HepG2 (cell line): ENCODE measurements at regions of chr22 and their contacts with region 1.

Region 1: GRCh38 chr22:17077255-17077654 is 7.5 kb upstream of the IL17RA start:
- DNase-seq: no peak
- ATAC-seq: no peak
- H3K4me3 ChIP-seq: no peak overlapping the region
- H3K27ac ChIP-seq: no peak overlapping the region
- H3K4me1 ChIP-seq: no peaks in the 10 kb centered on the region
- H3K27me3 ChIP-seq: no peaks in the 10 kb centered on the region
- CTCF ChIP-seq: no peak
- EP300 ChIP-seq: no peak
- POLR2A ChIP-seq: no peak
- RAD21 ChIP-seq: no peak

Region 2: DNA sequence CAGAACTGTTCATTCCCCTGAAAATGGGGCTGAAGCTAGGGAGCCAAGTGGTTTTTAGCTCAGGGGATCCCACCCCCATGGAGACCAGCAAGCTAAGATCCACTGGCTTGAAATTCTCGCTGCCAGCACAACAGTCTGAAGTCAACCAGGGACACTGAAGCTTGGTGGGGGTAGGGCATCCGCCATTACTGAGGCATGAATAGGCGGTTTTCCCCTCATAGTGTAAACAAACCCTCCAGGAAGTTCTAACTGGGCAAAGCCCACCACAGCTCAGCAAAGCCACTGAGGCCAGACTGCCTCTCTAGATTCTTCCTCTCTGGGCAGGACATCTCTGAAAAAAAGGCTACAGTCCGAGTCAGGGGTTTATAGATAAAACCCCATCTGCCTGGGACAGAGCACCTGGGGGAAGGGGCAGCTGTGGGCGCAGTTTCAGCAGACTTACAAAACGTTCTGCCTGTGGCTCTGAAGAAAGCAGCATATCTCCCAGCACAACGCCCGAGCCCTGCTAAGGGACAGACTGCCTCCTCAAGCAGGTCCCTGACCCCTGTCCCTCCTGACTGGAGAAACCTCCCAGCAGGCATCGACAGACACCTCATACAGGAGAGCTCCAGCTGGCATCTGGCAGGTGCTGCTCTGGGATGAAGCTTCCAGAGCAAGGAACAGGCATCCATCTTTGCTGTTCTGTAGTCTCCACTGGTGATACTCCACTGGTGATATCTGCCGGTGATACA is 101.9 kb before region 1 on chr22:
- CTCF ChIA-PET with region 1: no interaction called
- POLR2A ChIA-PET with region 1: no interaction called
- in situ Hi-C with region 1: no loop called
- intact Hi-C with region 1: no loop called
- DNase-seq: no peak
- ATAC-seq: no peak
- H3K4me3 ChIP-seq: no peak overlapping the region
- H3K27ac ChIP-seq: no peak overlapping the region
- H3K4me1 ChIP-seq: no peaks in the 10 kb centered on the region
- H3K27me3 ChIP-seq: no peaks in the 10 kb centered on the region
- CTCF ChIP-seq: no peak
- EP300 ChIP-seq: no peak
- POLR2A ChIP-seq: no peak
- RAD21 ChIP-seq: no peak

Region 3: GRCh38 chr22:17047656-17048055 is 29.6 kb before region 1 on chr22:
- CTCF ChIA-PET with region 1: no interaction called
- POLR2A ChIA-PET with region 1: no interaction called
- in situ Hi-C with region 1: no loop called
- intact Hi-C with region 1: no loop called
- DNase-seq: no peak
- ATAC-seq: no peak
- H3K4me3 ChIP-seq: no peak overlapping the region
- H3K27ac ChIP-seq: no peak overlapping the region
- H3K4me1 ChIP-seq: no peaks in the 10 kb centered on the region
- H3K27me3 ChIP-seq: no peaks in the 10 kb centered on the region; a peak in 1 of 5 replicates
- CTCF ChIP-seq: no peak
- EP300 ChIP-seq: no peak
- POLR2A ChIP-seq: no peak
- RAD21 ChIP-seq: no peak

Region 4: DNA sequence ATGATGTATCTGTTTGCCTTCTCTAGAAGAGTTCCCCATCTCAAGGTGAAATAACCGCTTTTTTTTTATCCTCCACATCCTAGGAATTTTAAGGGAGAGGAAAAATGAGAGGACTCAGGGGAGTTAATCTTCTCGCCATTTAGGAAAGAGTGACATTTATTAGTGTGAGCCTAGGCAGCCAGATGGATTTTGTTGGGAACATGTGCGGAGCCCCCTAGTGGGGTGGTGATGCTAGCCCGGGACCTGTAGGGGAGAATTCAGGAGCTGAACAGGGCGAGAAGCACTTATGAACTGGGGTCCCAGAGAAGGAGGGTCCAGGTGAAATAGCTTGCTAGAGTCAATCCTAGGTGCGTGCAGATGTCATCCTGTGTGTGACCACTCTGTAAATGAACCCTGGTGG is 18.3 kb after region 1 on chr22:
- CTCF ChIA-PET with region 1: interaction called, 10 read pairs
- POLR2A ChIA-PET with region 1: no interaction called
- in situ Hi-C with region 1: no loop called
- intact Hi-C with region 1: loop called (anchors 1 kb)
- DNase-seq: no peak
- ATAC-seq: peak; percentile 84
- H3K4me3 ChIP-seq: no peak overlapping the region
- H3K27ac ChIP-seq: no peak overlapping the region
- H3K4me1 ChIP-seq: no peaks in the 10 kb centered on the region
- H3K27me3 ChIP-seq: no peaks in the 10 kb centered on the region
- CTCF ChIP-seq: 0 out of 2 replicates have a peak, but pooled peaks have one; percentile 20
- EP300 ChIP-seq: no peak
- POLR2A ChIP-seq: no peak
- RAD21 ChIP-seq: no peak

Region 5: DNA sequence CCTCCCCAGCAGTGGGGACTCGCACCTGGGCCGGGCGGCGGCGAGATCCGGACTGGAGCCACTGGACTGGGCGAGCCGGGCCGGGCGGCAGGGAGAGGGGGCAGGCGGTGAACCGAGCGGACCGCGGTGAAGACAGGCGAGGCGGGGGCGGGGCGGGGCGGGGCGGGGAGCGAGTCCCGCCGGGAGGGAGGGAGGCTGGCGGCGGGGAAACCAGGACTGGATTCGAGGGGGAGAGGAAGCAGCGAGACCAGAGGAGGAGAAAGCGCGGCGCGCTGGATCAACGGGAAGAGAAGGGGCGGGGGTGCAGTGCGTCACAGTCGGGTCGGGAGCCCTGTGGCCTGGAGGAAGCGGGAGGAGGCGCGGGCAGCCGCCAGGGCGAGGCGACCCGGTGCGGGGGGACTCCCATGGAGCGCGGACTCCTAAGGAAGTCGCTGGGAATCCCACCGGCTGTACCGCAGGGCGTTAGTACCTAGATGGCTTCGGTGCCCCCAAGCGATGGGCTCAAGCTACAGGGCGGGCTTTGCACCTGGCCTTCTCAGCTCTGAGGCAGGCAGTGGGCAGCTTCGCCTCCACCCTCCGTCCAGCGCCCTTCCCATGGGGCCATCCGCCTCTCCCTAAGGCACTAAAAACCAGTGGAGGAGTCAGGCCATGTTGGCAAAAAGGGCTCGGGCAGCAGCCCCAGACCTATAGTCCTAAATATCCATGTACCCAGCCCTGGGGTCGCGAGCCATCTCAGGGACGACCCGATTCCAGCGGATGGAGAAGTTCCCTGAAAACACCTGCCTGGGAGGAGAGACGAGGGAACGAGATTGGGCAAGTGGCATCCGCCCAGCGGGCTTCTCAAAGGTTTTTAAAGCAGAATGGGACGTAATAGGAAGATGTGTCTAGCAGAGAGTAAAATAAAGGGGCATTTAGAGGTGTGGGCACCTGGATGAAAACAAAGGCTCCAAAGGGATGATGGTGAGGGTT is 44.3 kb after region 1 on chr22 and contains the start of gene TMEM121B:
- CTCF ChIA-PET with region 1: no interaction called
- POLR2A ChIA-PET with region 1: no interaction called
- in situ Hi-C with region 1: no loop called
- intact Hi-C with region 1: no loop called
- DNase-seq: no peak
- ATAC-seq: peak; percentile 56
- H3K4me3 ChIP-seq: peak within 1 kb of the TSS in 2 of 3 experiments; percentile 13 to 40; a peak in 3 of 6 replicates
- H3K27ac ChIP-seq: no peak within 1 kb of the TSS
- H3K4me1 ChIP-seq: no peaks in the 10 kb centered on the region
- H3K27me3 ChIP-seq: peaks cover 7 to 17% of the 10 kb centered on the region in 2 experiments; a peak in 4 of 5 replicates
- CTCF ChIP-seq: no peak
- EP300 ChIP-seq: no peak
- POLR2A ChIP-seq: no peak
- RAD21 ChIP-seq: no peak
- total RNA-seq, gene TMEM121B: not detected in 2 replicates

Region 6: DNA sequence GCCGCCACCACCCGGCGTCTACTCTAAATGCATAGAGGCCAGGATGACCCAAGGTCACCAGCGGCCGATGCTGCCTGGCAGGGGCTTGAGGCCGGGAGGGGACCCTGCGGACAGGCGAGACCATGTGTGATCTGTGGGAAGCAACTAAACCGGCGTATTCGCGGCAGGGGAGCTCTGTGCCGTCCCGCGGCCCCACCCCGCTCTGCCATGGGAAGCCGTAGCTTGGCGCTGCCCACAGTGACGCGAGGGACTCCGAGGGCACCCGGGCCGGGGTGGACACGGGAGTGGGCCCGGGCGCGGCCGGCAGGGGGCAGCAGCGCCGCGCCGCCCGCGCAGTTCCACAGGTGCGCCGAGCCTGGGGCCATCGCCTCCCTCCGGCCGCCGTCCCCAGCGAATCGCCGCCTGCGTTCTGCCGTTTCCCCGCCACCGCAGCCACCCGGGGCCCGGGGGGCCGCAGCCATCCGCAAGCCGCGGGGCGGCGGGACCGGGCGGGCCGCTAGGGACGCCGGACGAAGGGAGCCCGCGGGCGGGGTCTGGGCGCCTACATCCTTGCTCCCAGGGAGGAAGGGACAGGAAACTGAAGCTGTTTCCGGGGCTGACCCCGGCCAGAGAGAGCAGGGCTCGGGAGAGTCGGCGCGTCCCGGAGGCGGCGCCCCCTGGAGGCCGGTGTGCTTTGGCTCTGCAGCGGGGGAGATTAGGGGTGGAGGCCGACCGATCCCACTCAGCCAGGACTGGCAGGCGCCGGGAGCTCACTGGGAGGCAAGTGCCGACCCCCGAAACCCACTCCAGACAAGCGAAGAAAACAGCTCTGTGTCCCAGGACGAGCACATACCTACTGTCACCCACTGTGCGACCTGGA is 94.3 kb after region 1 on chr22:
- CTCF ChIA-PET with region 1: interaction called, 9 read pairs
- POLR2A ChIA-PET with region 1: interaction called, 7 read pairs
- in situ Hi-C with region 1: loop called (anchors 10 kb)
- intact Hi-C with region 1: loop called (anchors 2 kb)
- DNase-seq: peak; percentile 79
- ATAC-seq: peak; percentile 96
- H3K4me3 ChIP-seq: peak overlapping the region; percentile 49 to 78 (median 68); a peak in 5 of 6 replicates
- H3K27ac ChIP-seq: peak overlapping the region; percentile 44
- H3K4me1 ChIP-seq: no peaks in the 10 kb centered on the region
- H3K27me3 ChIP-seq: no peaks in the 10 kb centered on the region
- CTCF ChIP-seq: peak; percentile 78
- EP300 ChIP-seq: peak in 1 of 2 experiments; percentile 41; a peak in 1 of 4 replicates
- POLR2A ChIP-seq: 0 out of 4 replicates have a peak, but pooled peaks have one; percentile 33 to 37
- RAD21 ChIP-seq: peak; percentile 86

Region 7: DNA sequence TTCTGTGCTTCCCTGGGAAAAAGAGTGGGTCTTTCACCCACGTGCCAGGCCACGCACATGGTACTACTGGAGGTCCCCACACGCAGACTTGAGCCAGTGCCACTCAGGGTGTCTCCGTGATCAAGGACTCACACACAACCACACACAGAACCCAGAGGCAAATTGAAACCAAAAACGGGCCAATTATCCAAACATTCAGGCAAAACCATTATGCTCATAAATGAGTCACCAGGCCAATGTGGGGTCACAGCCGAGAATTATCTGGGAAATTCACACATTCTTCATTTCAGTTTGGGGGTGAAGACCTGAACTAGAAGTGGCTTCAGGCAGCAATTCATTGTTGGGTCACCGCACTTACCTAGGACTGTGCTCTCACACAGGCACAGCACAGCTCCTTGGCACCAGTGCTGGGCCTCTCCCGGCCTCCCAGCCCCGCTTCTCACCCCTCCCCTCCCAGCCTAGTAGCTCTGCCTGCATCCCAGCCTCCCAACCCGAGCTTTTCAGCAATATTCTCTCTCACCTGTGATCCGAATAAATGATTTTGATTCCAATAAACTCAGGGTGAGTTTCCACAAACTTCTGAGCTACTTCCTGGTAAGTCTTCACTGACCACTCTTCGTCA is 114.0 kb after region 1 on chr22:
- CTCF ChIA-PET with region 1: no interaction called
- POLR2A ChIA-PET with region 1: no interaction called
- in situ Hi-C with region 1: no loop called
- intact Hi-C with region 1: no loop called
- DNase-seq: no peak
- ATAC-seq: no peak
- H3K4me3 ChIP-seq: no peak overlapping the region
- H3K27ac ChIP-seq: no peak overlapping the region
- H3K4me1 ChIP-seq: no peaks in the 10 kb centered on the region
- H3K27me3 ChIP-seq: peaks cover 0 to 3% of the 10 kb centered on the region in 2 experiments; a peak in 2 of 5 replicates
- CTCF ChIP-seq: no peak
- EP300 ChIP-seq: no peak
- POLR2A ChIP-seq: no peak
- RAD21 ChIP-seq: no peak